Activated T-helper 1 cell treated with anti-CD3 and anti-CD28 coated beads, Interleukin-12 subunit alpha, Interleukin-12 subunit beta, Interleukin-2, Interleukin-4 antibody, amounts not matched to agents 30 ng/mL and 10 ng/mL and 1 ng/mL, durations not matched to agents 14 hours and 24 hours and 36 hours (primary cell): ENCODE measurements at regions of chr1 and their contacts with region 1.

Region 1: DNA sequence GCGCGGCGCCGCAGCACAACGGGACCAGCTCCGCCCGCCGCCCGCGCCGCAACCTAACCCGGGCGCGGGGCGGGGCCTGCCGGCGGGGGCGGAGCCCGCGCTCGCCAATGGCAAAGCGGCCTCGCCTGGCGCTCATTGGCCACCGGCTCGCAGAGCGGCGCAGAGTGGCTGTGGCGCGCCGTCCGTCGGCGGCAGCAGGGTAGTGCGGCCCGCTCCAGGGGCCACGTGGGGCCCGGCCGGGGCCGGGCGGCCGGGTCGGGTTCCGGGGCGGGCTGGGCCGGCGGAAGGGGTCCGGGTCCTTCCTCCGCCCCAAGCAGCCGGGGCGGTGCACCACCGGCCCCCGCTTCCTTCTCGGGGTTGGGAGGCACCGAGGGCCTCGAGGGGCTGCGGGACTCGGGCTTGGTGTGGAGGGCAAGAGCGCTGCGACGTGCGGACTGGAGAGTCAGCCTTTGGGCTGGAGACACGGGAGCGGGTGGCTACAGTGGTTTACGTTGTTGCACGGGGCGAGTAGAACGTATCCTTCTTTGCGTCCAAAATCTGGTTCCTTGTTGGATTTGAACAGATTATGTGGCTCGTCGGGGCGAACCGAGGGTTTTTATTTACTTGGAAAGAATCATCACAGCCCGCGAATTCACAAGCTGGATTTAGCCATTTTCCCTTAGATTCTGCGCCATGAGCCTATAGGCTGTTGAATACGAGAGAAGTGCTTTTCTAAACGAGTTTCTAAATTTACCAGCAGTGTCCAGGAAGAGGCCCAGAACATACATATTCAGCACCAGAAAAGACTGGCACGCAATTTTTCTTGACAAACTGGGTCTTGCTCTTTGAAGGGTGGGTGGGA is at the start of gene SRM:
- DNase-seq: peak; percentile 94
- H3K4me3 Mint-ChIP-seq: peak within 1 kb of the TSS; percentile 97
- H3K27ac Mint-ChIP-seq: peak within 1 kb of the TSS; percentile 95
- H3K4me1 Mint-ChIP-seq: peaks cover 30% of the 10 kb centered on the region
- H3K27me3 Mint-ChIP-seq: no peaks in the 10 kb centered on the region
- total RNA-seq, gene SRM: 306 and 332 TPM in 2 replicates

Region 2: DNA sequence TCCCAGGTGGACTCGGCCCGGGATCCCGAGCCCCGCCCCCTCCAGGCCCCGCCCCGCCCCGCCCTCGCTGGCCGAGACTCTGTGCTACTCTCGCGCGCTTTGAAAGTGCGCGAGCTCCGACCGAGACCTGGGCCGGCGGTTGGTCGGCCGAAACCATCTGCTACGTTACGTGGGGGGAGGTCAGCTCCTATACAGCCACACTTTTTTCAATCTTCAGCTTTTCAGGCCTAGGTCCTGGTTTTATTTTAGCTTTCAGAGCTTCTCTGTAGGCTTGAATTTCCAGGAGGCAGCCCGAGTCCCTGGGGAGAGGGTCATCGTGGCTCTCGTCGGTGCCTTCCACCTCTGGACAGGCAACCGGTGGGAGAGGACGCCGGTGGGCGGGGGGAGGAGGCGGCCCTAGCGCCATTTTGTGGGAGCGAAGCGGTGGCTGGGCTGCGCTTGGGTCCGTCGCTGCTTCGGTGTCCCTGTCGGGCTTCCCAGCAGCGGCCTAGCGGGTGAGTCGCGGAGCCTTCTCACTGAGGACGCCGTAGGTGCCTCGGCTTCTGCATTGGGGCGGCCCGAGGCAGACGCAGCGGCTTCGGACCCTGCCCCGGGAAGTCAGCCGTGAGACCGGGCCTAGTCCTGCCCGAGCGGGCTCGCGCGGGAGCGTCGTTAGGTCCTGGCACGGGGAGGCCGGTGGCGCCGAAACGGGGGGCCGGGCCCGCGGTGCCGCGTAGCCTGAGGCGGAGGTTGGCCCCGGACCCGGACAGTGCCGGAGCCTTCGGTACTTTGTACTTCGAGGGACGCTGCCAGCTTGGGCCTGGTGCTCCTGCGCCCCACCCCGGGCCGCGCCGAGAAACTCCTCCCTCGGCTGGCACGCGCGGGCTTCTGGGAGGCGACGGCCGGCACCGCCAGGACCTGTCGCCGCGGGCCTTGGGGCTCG is 47.7 kb before region 1 on chr1 and contains the start of gene TARDBP:
- intact Hi-C with region 1: loop called (anchors 1 kb)
- DNase-seq: peak; percentile 88
- H3K4me3 Mint-ChIP-seq: peak within 1 kb of the TSS; percentile 94
- H3K27ac Mint-ChIP-seq: peak within 1 kb of the TSS; percentile 98
- H3K4me1 Mint-ChIP-seq: peaks cover 18% of the 10 kb centered on the region
- H3K27me3 Mint-ChIP-seq: no peaks in the 10 kb centered on the region
- total RNA-seq, gene TARDBP: 197 TPM in 2 replicates

Region 3: DNA sequence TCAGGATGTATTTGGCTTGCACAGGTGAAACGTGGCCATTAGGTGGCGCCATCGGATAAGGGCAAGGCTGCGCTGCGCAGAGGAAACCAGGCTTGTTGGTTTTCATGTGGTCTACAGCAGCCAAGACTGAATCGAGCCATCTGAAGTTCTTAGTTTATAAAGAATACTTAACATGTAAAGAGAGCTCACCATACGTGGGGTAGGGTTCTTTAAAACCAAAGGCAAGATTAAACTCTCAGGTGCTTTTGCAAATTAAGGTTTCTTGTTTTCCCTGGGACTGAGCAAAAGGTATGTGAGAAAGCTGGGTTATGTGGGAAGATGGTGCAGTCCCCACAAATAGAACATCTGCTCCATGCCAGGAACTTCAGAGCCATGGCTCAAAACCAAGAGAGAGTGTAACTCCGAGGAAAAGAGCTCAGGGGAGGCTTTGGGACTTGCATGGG is 22.4 kb before region 1 on chr1:
- intact Hi-C with region 1: loop called (anchors 1 kb)
- DNase-seq: peak; percentile 80
- H3K4me3 Mint-ChIP-seq: no peak overlapping the region
- H3K27ac Mint-ChIP-seq: no peak overlapping the region
- H3K4me1 Mint-ChIP-seq: peaks cover 7% of the 10 kb centered on the region
- H3K27me3 Mint-ChIP-seq: peaks cover 3% of the 10 kb centered on the region

Region 4: GRCh38 chr1:11099310-11100149 is 39.3 kb after region 1 on chr1 and contains the start of gene EXOSC10:
- intact Hi-C with region 1: loop called (anchors 1 kb)
- DNase-seq: peak; percentile 96
- H3K4me3 Mint-ChIP-seq: peak within 1 kb of the TSS; percentile 96
- H3K27ac Mint-ChIP-seq: peak within 1 kb of the TSS; percentile 96
- H3K4me1 Mint-ChIP-seq: peaks cover 13% of the 10 kb centered on the region
- H3K27me3 Mint-ChIP-seq: no peaks in the 10 kb centered on the region
- total RNA-seq, gene EXOSC10: 93.5 and 103 TPM in 2 replicates

Region 5: GRCh38 chr1:11143907-11144306 is 83.7 kb after region 1 on chr1:
- intact Hi-C with region 1: loop called (anchors 1 kb)
- DNase-seq: no peak
- H3K4me3 Mint-ChIP-seq: peak overlapping the region; percentile 16
- H3K27ac Mint-ChIP-seq: peak overlapping the region; percentile 89
- H3K4me1 Mint-ChIP-seq: peaks cover 23% of the 10 kb centered on the region
- H3K27me3 Mint-ChIP-seq: no peaks in the 10 kb centered on the region

Region 6: GRCh38 chr1:11262171-11263049 is 202.2 kb after region 1 on chr1 and contains the start of gene MTOR:
- intact Hi-C with region 1: loop called (anchors 2 kb)
- DNase-seq: peak; percentile 97
- H3K4me3 Mint-ChIP-seq: peak within 1 kb of the TSS; percentile 97
- H3K27ac Mint-ChIP-seq: peak within 1 kb of the TSS; percentile 82
- H3K4me1 Mint-ChIP-seq: peaks cover 11% of the 10 kb centered on the region
- H3K27me3 Mint-ChIP-seq: peaks cover 3% of the 10 kb centered on the region
- total RNA-seq, gene MTOR: 48.7 and 49.4 TPM in 2 replicates

Region 7: GRCh38 chr1:11735854-11736745 is 675.9 kb after region 1 on chr1 and contains the start of gene AGTRAP:
- intact Hi-C with region 1: loop called (anchors 10 kb)
- DNase-seq: peak; percentile 84
- H3K4me3 Mint-ChIP-seq: peak within 1 kb of the TSS; percentile 96
- H3K27ac Mint-ChIP-seq: peak within 1 kb of the TSS; percentile 88
- H3K4me1 Mint-ChIP-seq: peaks cover 67% of the 10 kb centered on the region
- H3K27me3 Mint-ChIP-seq: no peaks in the 10 kb centered on the region
- total RNA-seq, gene AGTRAP: 13.8 and 15.9 TPM in 2 replicates